Activated T-helper 1 cell treated with anti-CD3 and anti-CD28 coated beads, Interleukin-12 subunit alpha, Interleukin-12 subunit beta, Interleukin-2, Interleukin-4 antibody, amounts not matched to agents 30 ng/mL and 10 ng/mL and 1 ng/mL, durations not matched to agents 14 hours and 24 hours and 36 hours (primary cell): ENCODE measurements at regions of chr20 and their contacts with region 1.

Region 1: DNA sequence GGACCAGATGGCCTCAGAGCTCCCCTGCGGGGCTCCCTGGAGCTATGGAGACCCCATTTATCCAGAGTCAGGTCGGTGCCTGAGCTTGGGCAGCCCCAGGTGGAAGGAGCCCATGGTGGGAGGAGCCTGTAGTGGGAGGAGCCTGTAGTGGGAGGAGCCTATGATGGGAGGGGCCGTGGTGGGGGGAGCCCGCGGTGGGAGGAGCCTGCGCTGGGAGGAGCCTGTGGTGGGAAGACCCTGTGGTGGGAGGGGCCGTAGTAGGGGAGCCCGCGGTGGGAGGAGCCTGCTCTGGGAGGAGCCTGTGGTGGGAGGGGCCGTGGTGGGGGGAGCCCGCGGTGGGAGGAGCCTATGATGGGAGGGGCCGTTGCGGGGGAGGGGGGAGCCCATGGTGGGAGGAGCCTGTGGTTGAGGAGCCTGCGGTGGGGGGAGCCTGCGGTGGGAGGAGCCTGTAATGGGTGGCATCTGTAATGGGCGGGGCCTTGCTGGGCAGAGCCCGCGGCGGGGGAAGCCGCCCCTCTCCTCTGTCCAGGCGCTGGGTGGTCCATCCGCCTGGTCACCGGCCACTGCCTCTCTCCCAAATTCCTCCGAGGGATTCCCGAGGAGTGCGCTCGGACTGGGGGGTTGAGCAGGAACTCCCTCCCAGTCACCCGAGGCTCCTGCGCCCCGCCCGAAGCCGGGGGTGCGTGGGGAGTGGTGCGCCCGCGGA is 579 bp upstream of the FNDC11 start:
- DNase-seq: peak; percentile 86
- H3K4me3 Mint-ChIP-seq: peak overlapping the region; percentile 63
- H3K27ac Mint-ChIP-seq: peak overlapping the region; percentile 55
- H3K4me1 Mint-ChIP-seq: peaks cover 9% of the 10 kb centered on the region
- H3K27me3 Mint-ChIP-seq: peaks cover 19% of the 10 kb centered on the region

Region 2: GRCh38 chr20:63520504-63520933 is 32.9 kb before region 1 on chr20 and contains the start of gene PPDPF:
- intact Hi-C with region 1: loop called (anchors 1 kb)
- DNase-seq: peak; percentile 81
- H3K4me3 Mint-ChIP-seq: peak within 1 kb of the TSS; percentile 84
- H3K27ac Mint-ChIP-seq: peak within 1 kb of the TSS; percentile 70
- H3K4me1 Mint-ChIP-seq: no peaks in the 10 kb centered on the region
- H3K27me3 Mint-ChIP-seq: peaks cover 4% of the 10 kb centered on the region
- total RNA-seq, gene PPDPF: 117 and 122 TPM in 2 replicates

Region 3: GRCh38 chr20:63567386-63568169 is 14.2 kb after region 1 on chr20:
- intact Hi-C with region 1: loop called (anchors 1 kb)
- DNase-seq: peak; percentile 59
- H3K4me3 Mint-ChIP-seq: peak overlapping the region; percentile 69
- H3K27ac Mint-ChIP-seq: peak overlapping the region; percentile 70
- H3K4me1 Mint-ChIP-seq: peaks cover 8% of the 10 kb centered on the region
- H3K27me3 Mint-ChIP-seq: no peaks in the 10 kb centered on the region

Region 4: DNA sequence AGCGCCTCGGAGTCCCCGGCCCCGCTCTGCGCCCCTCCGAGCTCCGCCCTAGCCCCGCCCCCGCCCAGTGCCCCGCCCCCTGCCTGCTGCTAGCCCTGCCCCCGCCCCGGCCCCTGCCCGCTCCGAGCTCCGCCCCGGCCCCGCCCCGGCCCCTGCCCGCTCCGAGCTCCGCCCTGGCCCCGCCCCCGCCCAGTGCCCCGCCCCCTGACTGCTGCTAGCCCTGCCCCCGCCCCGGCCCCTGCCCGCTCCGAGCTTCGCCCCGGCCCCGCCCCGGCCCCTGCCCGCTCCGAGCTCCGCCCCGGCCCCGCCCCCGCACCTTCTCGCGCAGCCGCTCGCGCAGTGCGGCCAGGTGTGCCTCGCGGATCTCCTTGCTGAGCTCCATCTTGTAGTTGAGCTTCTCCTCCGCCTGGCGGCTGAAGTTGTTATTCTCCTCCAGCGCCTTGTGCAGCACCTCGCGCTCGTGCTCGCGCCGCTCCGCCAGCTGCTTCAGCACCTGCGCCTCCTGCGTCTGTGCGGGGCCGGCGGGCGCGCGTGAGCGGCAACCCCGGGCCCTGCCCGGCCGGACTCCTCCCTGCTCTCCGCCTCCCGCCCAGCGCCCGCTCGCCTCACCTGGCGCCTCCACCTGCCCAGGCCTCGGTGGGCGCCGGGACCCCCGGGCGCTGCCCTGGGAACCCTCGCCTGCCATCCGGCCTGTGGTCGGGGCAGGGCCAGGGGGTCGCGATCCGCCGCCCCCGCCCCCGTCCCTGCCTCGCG is 88.6 kb after region 1 on chr20:
- intact Hi-C with region 1: loop called (anchors 1 kb)
- DNase-seq: peak; percentile 93
- H3K4me3 Mint-ChIP-seq: peak overlapping the region; percentile 57
- H3K27ac Mint-ChIP-seq: peak overlapping the region; percentile 70
- H3K4me1 Mint-ChIP-seq: peaks cover 21% of the 10 kb centered on the region
- H3K27me3 Mint-ChIP-seq: peaks cover 7% of the 10 kb centered on the region

Region 5: GRCh38 chr20:63894358-63895201 is 341.2 kb after region 1 on chr20 and contains the start of gene DNAJC5:
- intact Hi-C with region 1: loop called (anchors 1 kb)
- DNase-seq: peak; percentile 98
- H3K4me3 Mint-ChIP-seq: peak within 1 kb of the TSS; percentile 89
- H3K27ac Mint-ChIP-seq: peak within 1 kb of the TSS; percentile 96
- H3K4me1 Mint-ChIP-seq: peaks cover 42% of the 10 kb centered on the region
- H3K27me3 Mint-ChIP-seq: no peaks in the 10 kb centered on the region
- total RNA-seq, gene DNAJC5: 47.5 and 48.2 TPM in 2 replicates

Region 6: GRCh38 chr20:63941282-63942060 is 388.1 kb after region 1 on chr20:
- intact Hi-C with region 1: loop called (anchors 2 kb)
- DNase-seq: peak; percentile 79
- H3K4me3 Mint-ChIP-seq: no peak overlapping the region
- H3K27ac Mint-ChIP-seq: peak overlapping the region; percentile 82
- H3K4me1 Mint-ChIP-seq: peaks cover 4% of the 10 kb centered on the region
- H3K27me3 Mint-ChIP-seq: no peaks in the 10 kb centered on the region

Region 7: DNA sequence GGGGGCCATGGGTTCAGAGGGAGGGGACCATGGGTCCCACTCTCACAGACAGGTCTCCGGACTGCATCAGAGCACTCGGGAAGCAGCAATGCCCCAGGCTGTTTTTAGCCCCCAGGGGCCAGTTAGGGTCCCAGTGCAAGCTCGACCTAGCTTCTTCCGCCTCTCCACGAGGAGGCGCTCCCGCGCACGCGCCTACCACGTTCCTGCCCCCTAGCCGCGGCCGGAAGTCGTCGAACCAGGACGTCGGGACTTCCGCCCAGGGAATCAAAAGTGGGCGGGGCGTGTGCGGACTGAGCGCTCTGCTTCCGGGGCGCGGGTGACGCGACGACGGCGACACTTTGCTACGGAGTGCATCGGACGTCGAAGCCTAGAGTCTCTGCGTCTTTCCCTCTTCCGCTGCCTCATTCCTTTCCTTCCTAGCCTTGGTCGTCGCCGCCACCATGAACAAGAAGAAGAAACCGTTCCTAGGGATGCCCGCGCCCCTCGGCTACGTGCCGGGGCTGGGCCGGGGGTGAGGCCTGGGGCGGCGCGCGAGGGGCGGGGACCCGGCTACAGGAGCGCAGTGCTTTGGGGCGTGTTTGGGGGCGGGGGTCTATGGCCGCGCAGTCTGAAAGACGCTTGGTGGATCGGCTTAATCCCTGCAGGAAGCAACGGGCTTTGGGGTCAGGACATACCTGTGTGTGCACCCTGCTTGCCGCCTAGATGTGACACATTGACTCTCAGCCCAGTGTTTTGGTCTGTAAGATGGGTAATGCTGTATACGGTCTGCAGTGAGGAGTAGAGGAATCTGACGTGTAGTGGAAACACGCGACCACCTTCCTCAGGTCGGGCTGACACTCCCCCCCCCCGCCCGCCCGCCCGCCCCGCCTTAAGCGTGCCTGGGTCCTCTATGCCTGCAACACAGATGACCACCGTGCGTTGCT is 427.7 kb after region 1 on chr20 and contains the start of gene PRPF6:
- intact Hi-C with region 1: loop called (anchors 2 kb)
- DNase-seq: peak; percentile 94
- H3K4me3 Mint-ChIP-seq: peak within 1 kb of the TSS; percentile 98
- H3K27ac Mint-ChIP-seq: peak within 1 kb of the TSS; percentile 99
- H3K4me1 Mint-ChIP-seq: peaks cover 64% of the 10 kb centered on the region
- H3K27me3 Mint-ChIP-seq: no peaks in the 10 kb centered on the region
- total RNA-seq, gene PRPF6: 82.3 and 83.6 TPM in 2 replicates